ENCODE measurements at regions of chr7 and their contacts with region 1.

Region 1: GRCh38 chr7:24381894-24382505 is 98.0 kb downstream of the NPY start:
- DNase-seq: no peak
- H3K4me3 Mint-ChIP-seq: no peak overlapping the region
- H3K27ac Mint-ChIP-seq: no peak overlapping the region
- H3K4me1 Mint-ChIP-seq: no peaks in the 10 kb centered on the region
- H3K27me3 Mint-ChIP-seq: peaks cover 17% of the 10 kb centered on the region

Region 2: DNA sequence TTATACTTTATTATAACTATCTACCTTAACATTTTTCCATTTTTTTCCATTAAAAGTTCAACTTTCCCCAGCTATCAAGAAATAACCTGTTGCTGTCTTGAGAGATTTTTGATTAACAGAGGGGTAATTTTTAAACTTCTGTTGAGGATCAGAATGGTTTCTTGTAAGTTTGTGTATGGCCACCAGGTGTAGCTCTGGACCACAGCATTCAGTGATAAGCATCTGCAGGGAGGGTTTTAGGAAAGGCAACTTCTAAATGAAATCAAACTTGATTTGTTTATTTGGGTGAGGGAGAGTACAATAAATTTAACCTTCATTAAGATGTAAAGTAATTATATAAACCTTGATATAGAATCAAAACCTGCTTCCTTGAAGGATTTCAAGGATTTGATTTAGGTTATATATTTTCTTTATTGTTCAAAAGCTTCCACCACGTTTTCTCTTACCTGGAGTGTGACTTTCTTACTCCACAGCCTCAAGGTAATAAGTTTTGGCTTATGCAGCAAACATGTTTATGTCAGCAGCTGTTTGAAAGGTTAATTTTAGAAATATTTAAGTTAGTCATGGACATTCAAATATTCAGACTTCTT is 518.7 kb before region 1 on chr7:
- intact Hi-C with region 1: loop called (anchors 10 kb)
- DNase-seq: no peak
- H3K4me3 Mint-ChIP-seq: no peak overlapping the region
- H3K27ac Mint-ChIP-seq: no peak overlapping the region
- H3K4me1 Mint-ChIP-seq: peaks cover 12% of the 10 kb centered on the region
- H3K27me3 Mint-ChIP-seq: peaks cover 27% of the 10 kb centered on the region

Region 3: GRCh38 chr7:24290004-24290641 is 91.9 kb before region 1 on chr7:
- intact Hi-C with region 1: loop called (anchors 2 kb)
- DNase-seq: peak; percentile 32
- H3K4me3 Mint-ChIP-seq: no peak overlapping the region
- H3K27ac Mint-ChIP-seq: no peak overlapping the region
- H3K4me1 Mint-ChIP-seq: peaks cover 8% of the 10 kb centered on the region
- H3K27me3 Mint-ChIP-seq: peaks cover 57% of the 10 kb centered on the region

Region 4: GRCh38 chr7:24483804-24484203 is 101.8 kb after region 1 on chr7:
- intact Hi-C with region 1: no loop called
- DNase-seq: no peak
- H3K4me3 Mint-ChIP-seq: no peak overlapping the region
- H3K27ac Mint-ChIP-seq: no peak overlapping the region
- H3K4me1 Mint-ChIP-seq: no peaks in the 10 kb centered on the region
- H3K27me3 Mint-ChIP-seq: peaks cover 42% of the 10 kb centered on the region

Measured in activated T-helper 2 cell treated with anti-CD3 and anti-CD28 coated beads, Interferon-gamma antibody, Interleukin-2, Interleukin-4, amounts not matched to agents 10 μg/mL and 5 μg/mL and 100 μg/mL, durations not matched to agents 14 hours and 24 hours and 36 hours (primary cell).